Cardiac septum (tissue), 1 donor: ENCODE measurements at regions of chr13 and their contacts with region 1.

Region 1: GRCh38 chr13:95536632-95537241 is 15.8 kb upstream of the CLDN10 start:
- DNase-seq: no peak

Region 2: DNA sequence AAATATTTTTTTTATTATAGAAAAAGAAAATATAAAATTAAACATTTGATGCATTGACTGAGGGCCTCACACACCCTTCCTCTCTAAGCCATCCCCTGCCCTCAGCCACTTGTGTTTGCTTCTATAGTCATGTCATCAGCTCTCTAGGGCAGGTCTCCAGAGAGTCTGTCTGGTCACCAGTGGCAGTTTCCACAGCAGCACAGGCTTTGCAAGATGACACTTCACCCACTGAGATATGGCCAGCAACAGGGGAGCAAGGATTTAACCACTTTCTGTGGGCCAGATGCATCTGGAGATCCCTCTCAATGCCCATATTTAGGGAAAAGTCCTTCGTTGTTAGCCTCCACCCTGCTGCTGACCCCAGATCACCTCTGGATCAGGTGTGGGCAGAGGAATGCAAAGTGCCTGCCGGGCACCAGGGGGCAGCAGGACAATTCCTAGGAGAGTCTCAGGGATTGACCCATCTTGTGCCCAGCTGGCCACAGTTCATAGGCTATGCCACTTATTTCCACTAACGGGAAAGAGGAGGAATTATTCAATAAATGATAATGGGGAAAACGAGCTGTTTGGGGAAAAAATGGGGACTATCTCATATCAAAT is 240.3 kb before region 1 on chr13:
- intact Hi-C with region 1: loop called (anchors 5 kb)
- DNase-seq: no peak

Region 3: DNA sequence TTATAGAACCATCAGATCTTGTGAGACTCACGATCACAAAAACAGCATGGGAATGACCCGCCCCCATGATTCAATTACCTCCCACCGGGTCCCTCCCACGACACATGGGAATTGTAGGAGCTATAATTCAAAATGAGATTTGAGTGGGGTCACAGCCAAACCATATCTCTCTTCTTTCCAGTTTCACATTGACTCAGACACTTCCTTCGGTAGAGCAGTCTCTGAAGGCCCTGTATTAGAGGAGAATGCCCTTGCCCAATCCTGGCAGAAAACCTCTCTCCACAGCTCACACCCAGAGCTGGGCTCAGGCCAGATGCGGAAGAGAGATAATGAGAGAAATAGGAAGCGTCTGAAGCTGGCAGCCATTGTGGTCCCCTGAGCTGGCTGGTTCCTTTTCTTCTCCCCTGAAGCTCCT is 56.6 kb before region 1 on chr13:
- intact Hi-C with region 1: no loop called
- DNase-seq: no peak

Region 4: GRCh38 chr13:95497381-95497807 is 39.3 kb before region 1 on chr13:
- intact Hi-C with region 1: loop called (anchors 5 kb)
- DNase-seq: peak; percentile 81

Region 5: DNA sequence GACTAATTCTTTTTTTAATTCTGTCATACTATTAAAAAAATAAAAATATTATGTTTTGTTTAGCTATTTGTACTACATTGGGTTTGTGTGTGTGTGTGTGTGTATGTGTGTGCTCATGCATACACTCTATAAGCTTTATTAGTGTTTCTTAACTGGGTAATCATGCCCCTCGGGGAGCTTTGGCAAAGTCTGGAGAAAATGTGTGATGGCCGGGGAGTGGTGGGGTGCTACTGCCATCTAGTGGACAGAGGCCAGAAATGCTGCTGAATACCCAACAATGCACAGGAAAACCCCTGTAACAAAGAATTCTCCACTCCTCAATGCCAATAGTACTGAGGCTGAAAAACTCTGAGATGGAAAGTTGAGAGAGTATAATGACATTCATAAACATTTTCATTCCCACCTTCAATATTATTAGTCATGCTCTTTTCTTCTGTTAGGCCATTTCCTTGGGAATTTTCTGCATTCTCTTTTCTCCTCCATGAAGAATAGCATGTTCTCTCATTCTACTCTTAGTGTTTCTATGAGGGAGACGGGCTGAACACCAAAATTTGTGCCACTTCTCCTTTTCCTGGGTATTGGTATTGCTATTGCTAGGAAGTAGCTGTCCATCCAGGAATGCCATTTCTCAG is 297.5 kb after region 1 on chr13:
- intact Hi-C with region 1: loop called (anchors 5 kb)
- DNase-seq: peak; percentile 80

Region 6: GRCh38 chr13:96671073-96671472 is 1134.3 kb after region 1 on chr13:
- intact Hi-C with region 1: no loop called
- DNase-seq: no peak